Natural killer cell (primary cell): ENCODE measurements at regions of chr1 and their contacts with region 1.

Region 1: DNA sequence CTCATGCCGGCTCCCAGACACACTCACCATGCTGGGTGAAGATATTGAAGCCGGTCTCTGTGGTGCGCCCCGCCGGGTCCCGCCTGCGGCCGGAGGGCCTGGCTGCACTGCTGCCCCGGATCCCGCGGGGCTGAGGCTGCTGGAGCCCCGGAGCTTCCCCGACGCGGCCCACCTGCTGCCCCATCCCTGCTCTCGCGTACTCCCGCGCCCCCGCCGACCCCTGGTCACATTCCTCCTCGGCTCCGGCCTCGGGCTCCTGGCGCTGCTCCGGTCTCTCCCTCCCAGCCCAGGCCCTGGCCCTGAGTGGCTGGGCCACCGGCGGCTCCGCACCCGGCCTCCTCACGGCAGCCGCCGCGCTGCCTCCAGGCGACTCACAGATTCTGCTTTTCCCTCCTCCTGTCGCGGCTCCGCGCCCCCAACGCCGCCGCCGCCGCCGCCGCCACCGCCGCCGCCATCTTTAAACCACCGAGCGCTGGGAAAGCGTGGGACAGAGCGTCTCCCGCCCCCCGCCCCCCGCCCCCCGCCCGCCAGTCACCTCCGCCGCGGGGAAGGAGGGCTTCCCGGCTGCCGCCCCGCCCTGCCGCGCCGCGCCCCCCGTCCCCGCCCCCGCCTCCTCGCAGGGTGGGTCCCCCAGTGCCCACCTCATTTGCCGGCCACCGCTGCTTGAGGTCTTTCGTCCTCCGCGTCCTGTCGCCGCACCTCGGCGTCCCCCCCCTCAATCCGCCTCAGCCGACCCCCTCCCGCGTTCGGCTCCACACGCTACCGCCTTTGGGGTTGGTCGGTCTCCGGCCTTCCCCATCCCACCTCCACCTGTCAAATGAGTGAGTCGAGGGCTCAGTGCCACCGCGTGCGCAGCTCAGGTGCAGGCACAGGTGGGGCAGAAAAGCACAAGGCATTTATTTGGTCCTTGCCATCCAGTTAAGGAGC is at the start of gene ABL2:
- DNase-seq: peak; percentile 44 to 65
- ATAC-seq: peak; percentile 70 to 74 (median 72)
- H3K4me3 ChIP-seq: peak within 1 kb of the TSS; percentile 63
- H3K4me3 Mint-ChIP-seq: peak within 1 kb of the TSS; percentile 91
- H3K27ac ChIP-seq: peak within 1 kb of the TSS; percentile 65
- H3K27ac Mint-ChIP-seq: peak within 1 kb of the TSS; percentile 72 to 84
- H3K4me1 ChIP-seq: peaks cover 10% of the 10 kb centered on the region
- H3K4me1 Mint-ChIP-seq: peaks cover 19 to 26% of the 10 kb centered on the region in 2 donors
- H3K27me3 ChIP-seq: no peaks in the 10 kb centered on the region
- H3K27me3 Mint-ChIP-seq: no peaks in the 10 kb centered on the region
- CTCF ChIP-seq: no peak
- total RNA-seq, gene ABL2: 11.1 to 16.3 (median 12.9) TPM

Region 2: GRCh38 chr1:178575611-178576331 is 653.7 kb before region 1 on chr1:
- intact Hi-C with region 1: no loop called
- DNase-seq: no peak
- ATAC-seq: no peak
- H3K4me3 ChIP-seq: no peak overlapping the region
- H3K4me3 Mint-ChIP-seq: no peak overlapping the region
- H3K27ac ChIP-seq: peak overlapping the region; percentile 69
- H3K27ac Mint-ChIP-seq: peak overlapping the region in 1 of 2 donors; percentile 14
- H3K4me1 ChIP-seq: peaks cover 7% of the 10 kb centered on the region
- H3K4me1 Mint-ChIP-seq: no peaks in the 10 kb centered on the region
- H3K27me3 ChIP-seq: no peaks in the 10 kb centered on the region
- H3K27me3 Mint-ChIP-seq: no peaks in the 10 kb centered on the region
- CTCF ChIP-seq: no peak

Region 3: DNA sequence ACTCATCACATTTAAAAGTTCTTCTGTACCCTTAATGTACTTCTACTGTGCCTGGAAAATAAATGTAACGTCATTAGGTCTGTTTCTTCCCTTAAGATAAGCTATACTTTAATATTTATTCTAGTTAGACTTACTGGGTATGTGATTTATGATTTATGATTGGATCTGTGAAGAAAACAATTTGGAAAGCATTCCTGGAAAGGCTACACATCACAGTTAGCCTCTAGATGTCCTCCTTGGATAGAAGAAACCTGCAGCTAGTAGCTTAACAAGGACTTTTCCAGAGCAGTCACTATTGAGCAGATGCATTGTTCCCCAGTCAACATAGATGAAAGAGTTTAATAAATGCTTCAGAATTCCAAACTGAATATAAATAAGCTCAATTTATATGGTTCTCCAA is 22.2 kb after region 1 on chr1:
- intact Hi-C with region 1: no loop called
- DNase-seq: peak in 1 of 2 donors; percentile 48
- ATAC-seq: no peak
- H3K4me3 ChIP-seq: no peak overlapping the region
- H3K4me3 Mint-ChIP-seq: no peak overlapping the region
- H3K27ac ChIP-seq: no peak overlapping the region
- H3K27ac Mint-ChIP-seq: no peak overlapping the region
- H3K4me1 ChIP-seq: no peaks in the 10 kb centered on the region
- H3K4me1 Mint-ChIP-seq: no peaks in the 10 kb centered on the region
- H3K27me3 ChIP-seq: no peaks in the 10 kb centered on the region
- H3K27me3 Mint-ChIP-seq: no peaks in the 10 kb centered on the region
- CTCF ChIP-seq: no peak

Region 4: GRCh38 chr1:179298952-179299351 is 69.5 kb after region 1 on chr1:
- intact Hi-C with region 1: loop called (anchors 5 kb)
- DNase-seq: peak; percentile 23 to 76
- ATAC-seq: peak; percentile 76 to 91 (median 85)
- H3K4me3 ChIP-seq: no peak overlapping the region
- H3K4me3 Mint-ChIP-seq: peak overlapping the region; percentile 56
- H3K27ac ChIP-seq: no peak overlapping the region
- H3K27ac Mint-ChIP-seq: peak overlapping the region; percentile 73 to 89
- H3K4me1 ChIP-seq: peaks cover 27% of the 10 kb centered on the region
- H3K4me1 Mint-ChIP-seq: peaks cover 70 to 77% of the 10 kb centered on the region in 2 donors
- H3K27me3 ChIP-seq: no peaks in the 10 kb centered on the region
- H3K27me3 Mint-ChIP-seq: no peaks in the 10 kb centered on the region
- CTCF ChIP-seq: no peak